ENCODE measurements at regions of chr17 and their contacts with region 1.

Region 1: GRCh38 chr17:3683054-3683511 is 12.9 kb downstream of the P2RX5 start:
- DNase-seq: peak; percentile 74
- ATAC-seq: peak; percentile 92
- H3K4me3 Mint-ChIP-seq: no peak overlapping the region
- H3K27ac Mint-ChIP-seq: no peak overlapping the region
- H3K4me1 Mint-ChIP-seq: peaks cover 11% of the 10 kb centered on the region
- H3K27me3 Mint-ChIP-seq: no peaks in the 10 kb centered on the region

Region 2: DNA sequence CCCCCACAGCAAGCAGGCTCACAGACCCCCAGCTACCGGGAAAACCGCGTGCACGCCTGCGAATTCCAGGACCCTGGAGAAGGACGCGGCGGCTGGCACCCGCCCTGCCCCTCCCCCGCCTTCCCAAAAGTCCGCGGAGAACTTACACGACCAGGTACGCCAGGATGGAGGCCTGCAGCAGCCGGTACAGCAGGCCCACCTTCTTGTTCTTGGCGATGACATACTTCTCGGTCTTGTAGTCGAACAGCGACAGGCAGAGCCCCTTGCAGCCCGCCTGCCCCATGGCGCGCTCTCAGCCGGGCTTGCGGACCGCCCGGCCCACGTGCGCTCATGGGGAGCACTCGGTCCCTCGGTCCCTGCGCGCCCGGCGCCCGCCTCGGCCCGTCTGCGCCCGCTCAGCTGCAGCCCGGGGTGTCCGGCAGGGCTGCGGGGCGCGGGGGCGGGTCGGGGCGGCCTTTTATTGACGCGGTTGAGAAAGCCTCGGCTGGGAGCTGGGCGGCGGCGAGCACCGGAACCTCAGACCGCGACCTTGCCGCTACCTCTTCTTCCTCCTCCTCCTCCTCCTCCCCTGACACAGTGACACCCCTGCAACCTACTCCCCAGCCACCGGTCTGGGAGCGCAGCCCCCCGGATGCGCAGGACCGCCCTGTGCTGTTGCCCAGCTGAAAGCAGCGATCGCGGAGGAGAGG is 12.8 kb after region 1 on chr17 and contains the start of gene P2RX5:
- CTCF ChIA-PET with region 1: interaction called, 34 read pairs
- DNase-seq: peak; percentile 76
- ATAC-seq: peak; percentile 76
- H3K4me3 Mint-ChIP-seq: peak within 1 kb of the TSS; percentile 85
- H3K27ac Mint-ChIP-seq: peak within 1 kb of the TSS; percentile 88
- H3K4me1 Mint-ChIP-seq: peaks cover 33% of the 10 kb centered on the region
- H3K27me3 Mint-ChIP-seq: no peaks in the 10 kb centered on the region
- total RNA-seq, gene P2RX5: 18.1 to 24.6 TPM

Region 3: GRCh38 chr17:3710951-3711383 is 27.9 kb after region 1 on chr17:
- CTCF ChIA-PET with region 1: interaction called, 18 read pairs
- DNase-seq: peak; percentile 90
- ATAC-seq: peak; percentile 99
- H3K4me3 Mint-ChIP-seq: peak overlapping the region; percentile 35
- H3K27ac Mint-ChIP-seq: peak overlapping the region; percentile 83
- H3K4me1 Mint-ChIP-seq: peaks cover 54% of the 10 kb centered on the region
- H3K27me3 Mint-ChIP-seq: no peaks in the 10 kb centered on the region

Region 4: GRCh38 chr17:3723556-3724369 is 40.7 kb after region 1 on chr17 and contains the start of gene HASPIN:
- CTCF ChIA-PET with region 1: interaction called, 28 read pairs
- DNase-seq: peak; percentile 94
- ATAC-seq: peak; percentile 94
- H3K4me3 Mint-ChIP-seq: peak within 1 kb of the TSS; percentile 95
- H3K27ac Mint-ChIP-seq: peak within 1 kb of the TSS; percentile 89
- H3K4me1 Mint-ChIP-seq: peaks cover 63% of the 10 kb centered on the region
- H3K27me3 Mint-ChIP-seq: no peaks in the 10 kb centered on the region
- total RNA-seq, gene HASPIN: 30.4 to 31.2 TPM

Region 5: GRCh38 chr17:3729881-3730280 is 46.8 kb after region 1 on chr17:
- CTCF ChIA-PET with region 1: interaction called, 51 read pairs
- DNase-seq: no peak
- ATAC-seq: no peak
- H3K4me3 Mint-ChIP-seq: no peak overlapping the region
- H3K27ac Mint-ChIP-seq: no peak overlapping the region
- H3K4me1 Mint-ChIP-seq: peaks cover 31% of the 10 kb centered on the region
- H3K27me3 Mint-ChIP-seq: no peaks in the 10 kb centered on the region

Region 6: DNA sequence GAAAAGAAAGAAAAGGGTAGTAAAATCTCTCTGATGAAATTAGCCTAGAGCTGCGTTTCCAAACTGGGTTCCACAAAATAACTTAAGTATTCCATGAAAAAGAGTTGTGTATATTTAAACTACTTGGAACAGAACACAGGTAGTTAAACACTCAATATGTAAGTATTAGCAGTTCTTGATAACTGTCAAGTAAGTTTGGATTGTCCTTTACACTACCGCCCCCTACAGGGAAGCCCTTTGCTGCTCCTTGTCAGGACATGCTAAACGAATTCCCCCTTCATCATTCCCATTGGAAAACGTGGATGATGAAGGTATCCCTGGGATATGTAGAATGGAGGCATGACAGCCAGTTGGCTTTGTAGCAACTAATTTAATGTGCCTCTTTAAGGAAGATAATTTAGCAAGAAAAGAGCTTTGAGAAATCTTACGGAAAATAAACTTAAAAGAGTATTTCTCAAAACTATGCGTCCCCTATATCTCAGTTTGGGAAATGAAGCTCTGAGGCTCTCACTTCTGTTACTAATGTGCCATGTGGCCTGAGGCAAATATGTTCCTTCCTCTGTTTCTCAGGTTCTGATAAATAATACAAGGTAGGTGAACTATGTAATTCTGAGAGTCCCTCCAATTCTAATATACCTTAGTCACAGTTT is 144.2 kb after region 1 on chr17:
- CTCF ChIA-PET with region 1: interaction called, 26 read pairs
- DNase-seq: peak; percentile 83
- ATAC-seq: peak; percentile 47
- H3K4me3 Mint-ChIP-seq: no peak overlapping the region
- H3K27ac Mint-ChIP-seq: no peak overlapping the region
- H3K4me1 Mint-ChIP-seq: peaks cover 19% of the 10 kb centered on the region
- H3K27me3 Mint-ChIP-seq: no peaks in the 10 kb centered on the region

Region 7: DNA sequence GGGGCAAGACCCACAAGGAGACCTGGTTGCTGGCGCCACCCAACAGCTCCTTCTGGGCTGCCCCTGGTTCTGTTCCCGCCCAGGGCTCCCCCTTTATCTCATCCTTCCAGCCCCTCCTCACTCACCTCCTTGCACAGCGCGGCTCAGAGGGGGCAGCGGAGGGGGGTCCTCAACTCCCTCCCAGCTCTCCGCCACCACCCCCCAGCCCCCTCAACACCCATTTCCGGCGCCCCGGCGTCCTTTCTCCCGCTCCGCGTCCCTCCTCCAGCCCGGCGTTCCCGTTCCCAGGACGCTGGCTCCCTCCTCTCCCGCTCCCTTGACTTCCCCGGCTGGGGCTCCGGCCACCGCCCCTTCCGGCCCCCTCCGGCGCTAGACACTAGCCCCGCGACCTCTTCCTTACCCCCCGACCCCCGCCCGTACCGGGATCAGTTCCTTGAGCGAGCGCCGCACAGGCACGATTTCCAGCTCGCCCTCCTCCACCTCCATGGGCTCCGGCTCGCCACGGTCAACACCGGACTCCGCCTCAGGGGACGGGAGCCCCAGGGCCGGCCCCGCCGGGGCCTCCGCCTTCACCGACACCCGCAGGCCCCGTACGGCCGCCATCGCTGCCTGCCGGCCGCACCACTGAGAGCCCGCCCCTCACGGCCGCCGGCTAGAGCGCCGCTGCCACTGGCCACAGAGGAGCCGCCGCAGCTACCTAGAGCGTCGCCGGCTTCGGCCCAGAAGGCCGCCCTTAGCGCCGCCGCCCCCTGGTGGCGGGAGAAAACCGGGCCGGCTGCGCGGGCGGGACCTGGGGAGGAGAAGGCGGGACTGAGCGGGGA is 162.7 kb after region 1 on chr17 and contains the start of gene NCBP3:
- CTCF ChIA-PET with region 1: interaction called, 11 read pairs
- DNase-seq: peak; percentile 92
- ATAC-seq: peak; percentile 95
- H3K4me3 Mint-ChIP-seq: peak within 1 kb of the TSS; percentile 98
- H3K27ac Mint-ChIP-seq: peak within 1 kb of the TSS; percentile 94
- H3K4me1 Mint-ChIP-seq: peaks cover 25% of the 10 kb centered on the region
- H3K27me3 Mint-ChIP-seq: peaks cover 12% of the 10 kb centered on the region
- total RNA-seq, gene NCBP3: 46.3 to 48.7 TPM

Measured in activated CD8-positive, alpha-beta memory T cell treated with anti-CD3 and anti-CD28 coated beads, Interleukin-2, amount 10 ng/mL, durations not matched to agents 7 days and 5 days (primary cell).